Right ventricle myocardium inferior (tissue), 1 donor: ENCODE measurements at regions of chr10 and their contacts with region 1.

Region 1: DNA sequence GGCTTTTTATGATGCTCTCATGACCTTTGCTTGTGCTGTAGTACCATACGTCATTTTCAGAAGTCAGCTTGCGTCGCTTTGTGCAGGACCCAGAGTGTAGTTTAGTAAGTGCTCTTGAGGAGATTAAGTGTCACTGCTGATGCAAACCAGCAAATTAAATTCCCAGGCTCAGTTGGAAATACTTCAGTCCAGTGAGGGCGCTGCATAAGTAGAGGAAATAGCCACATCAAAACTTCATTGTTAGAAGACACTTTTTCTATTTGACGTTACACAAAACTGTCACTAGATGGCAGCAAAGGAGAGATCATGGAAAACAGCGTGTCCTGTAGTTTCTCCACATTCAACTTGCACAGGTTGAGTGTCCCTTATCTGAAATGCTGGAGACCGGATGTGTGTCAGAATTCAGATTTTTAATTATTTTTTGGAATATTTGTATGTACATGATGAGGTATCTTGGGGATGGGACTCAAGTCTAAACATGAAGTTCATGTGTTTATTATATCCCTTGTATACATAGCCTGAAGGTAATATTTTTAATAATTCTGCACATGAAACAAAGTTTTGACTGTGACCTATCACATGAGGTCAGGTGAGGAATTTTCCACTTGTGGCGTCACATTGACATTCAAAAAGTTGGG is 7.9 kb downstream of the ZNF22 start:
- DNase-seq: no peak
- ATAC-seq: peak; percentile 88

Region 2: GRCh38 chr10:45235798-45236231 is 227.2 kb after region 1 on chr10:
- intact Hi-C with region 1: loop called (anchors 5 kb)
- DNase-seq: no peak
- ATAC-seq: no peak